ENCODE measurements at regions of chr7 and their contacts with region 1.

Region 1: GRCh38 chr7:140041659-140042385 is 20.9 kb downstream of the PARP12 start:
- DNase-seq: no peak
- H3K4me3 ChIP-seq: no peak overlapping the region
- CTCF ChIP-seq: no peak
- POLR2A ChIP-seq: no peak

Region 2: GRCh38 chr7:139825666-139826290 is 216.0 kb before region 1 on chr7:
- intact Hi-C with region 1: no loop called
- DNase-seq: peak in 1 of 2 donors; percentile 50
- H3K4me3 ChIP-seq: no peak overlapping the region
- CTCF ChIP-seq: no peak
- POLR2A ChIP-seq: no peak

Region 3: GRCh38 chr7:140017543-140017942 is 24.3 kb before region 1 on chr7:
- intact Hi-C with region 1: no loop called
- DNase-seq: no peak
- H3K4me3 ChIP-seq: no peak overlapping the region
- CTCF ChIP-seq: no peak
- POLR2A ChIP-seq: no peak

Region 4: GRCh38 chr7:140596519-140597427 is 555.0 kb after region 1 on chr7:
- intact Hi-C with region 1: no loop called
- DNase-seq: peak in 1 of 2 donors; percentile 7
- H3K4me3 ChIP-seq: no peak overlapping the region
- CTCF ChIP-seq: no peak
- POLR2A ChIP-seq: no peak

Region 5: DNA sequence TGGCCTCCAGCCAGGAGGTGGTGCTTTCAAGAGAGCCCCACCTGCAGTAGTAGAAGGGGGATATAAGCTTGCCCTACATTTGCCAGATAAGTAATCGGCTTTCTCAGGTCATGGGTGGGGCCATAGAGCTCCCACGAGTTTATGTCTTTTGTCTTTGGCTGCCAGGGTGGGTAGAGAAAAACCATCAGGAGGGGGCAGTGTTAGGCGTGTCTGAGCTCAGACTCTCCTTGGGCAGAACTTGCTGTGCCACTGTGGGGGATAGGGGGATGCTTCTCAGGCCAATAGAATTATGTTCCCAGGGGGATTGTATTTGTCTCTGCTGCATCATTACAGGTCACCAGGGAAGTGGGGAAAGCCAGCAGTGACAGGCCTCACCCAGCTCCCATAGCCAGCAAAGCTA is 985.2 kb after region 1 on chr7:
- intact Hi-C with region 1: loop called (anchors 5 kb)
- DNase-seq: no peak
- H3K4me3 ChIP-seq: no peak overlapping the region
- CTCF ChIP-seq: no peak
- POLR2A ChIP-seq: no peak